Transverse colon (tissue), 4 donors: ENCODE measurements at regions of chr2 and their contacts with region 1.

Region 1: GRCh38 chr2:42974721-42975717 is 182.6 kb upstream of the HAAO start:
- DNase-seq: peak; percentile 79
- H3K4me3 ChIP-seq: peak overlapping the region in 3 of 4 donors; percentile 16 to 46 (median 31)
- H3K27ac ChIP-seq: peak overlapping the region; percentile 58 to 81 (median 70)
- H3K4me1 ChIP-seq: peaks cover 14 to 42% (median 32%) of the 10 kb centered on the region in 4 donors
- H3K27me3 ChIP-seq: no peaks in the 10 kb centered on the region
- CTCF ChIP-seq: peak; percentile 93 to 97 (median 95)
- EP300 ChIP-seq: no peak
- POLR2A ChIP-seq: no peak

Region 2: DNA sequence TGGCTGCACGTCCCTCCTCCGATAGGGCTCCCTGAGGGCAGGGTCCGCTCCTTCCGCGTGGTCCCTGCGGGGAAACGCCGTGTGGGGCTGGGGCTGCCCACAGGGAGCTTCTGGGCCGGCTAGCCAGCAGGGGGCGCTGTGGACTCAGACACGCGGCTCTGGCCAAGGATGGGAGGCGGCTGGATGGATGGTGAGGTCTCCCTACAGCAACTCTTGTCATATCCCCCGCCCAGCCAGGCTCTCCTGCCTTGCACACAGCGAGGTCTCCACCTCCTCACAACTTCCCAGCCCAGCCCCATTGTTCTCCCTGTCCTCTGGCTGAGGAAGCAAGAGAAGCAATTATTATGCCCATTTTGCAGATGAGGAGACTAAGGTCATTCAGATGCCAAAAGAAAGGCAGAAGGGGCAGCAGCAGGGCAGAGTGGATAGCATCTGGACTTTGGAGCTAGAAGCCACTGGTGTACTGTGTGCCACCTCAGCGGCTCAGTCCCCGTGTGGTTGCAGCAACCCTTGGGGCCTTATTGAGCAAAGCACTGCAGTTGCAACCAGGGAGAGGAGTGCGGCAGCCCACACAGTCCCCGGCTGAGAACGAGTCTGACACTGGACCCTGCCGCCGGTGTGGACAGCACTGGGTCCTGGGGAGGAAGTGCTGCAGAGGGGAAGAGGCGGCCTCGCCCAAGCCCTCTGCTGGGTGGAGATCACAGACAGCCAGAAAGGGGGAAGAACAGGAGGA is 152.4 kb after region 1 on chr2:
- in situ Hi-C with region 1: loop called in 1 of 4 experiments (anchors 10 kb)
- intact Hi-C with region 1: no loop called
- DNase-seq: peak; percentile 84
- H3K4me3 ChIP-seq: no peak overlapping the region
- H3K27ac ChIP-seq: peak overlapping the region; percentile 83 to 89 (median 86)
- H3K4me1 ChIP-seq: peaks cover 20 to 60% (median 34%) of the 10 kb centered on the region in 4 donors
- H3K27me3 ChIP-seq: no peaks in the 10 kb centered on the region
- CTCF ChIP-seq: peak; percentile 52 to 78 (median 59)
- EP300 ChIP-seq: no peak
- POLR2A ChIP-seq: no peak